Breast epithelium (tissue), 4 donors: ENCODE measurements at regions of chr2 and their contacts with region 1.

Region 1: GRCh38 chr2:200834701-200835100 is 23.0 kb downstream of the BZW1 start:
- DNase-seq: no peak
- H3K4me3 ChIP-seq: no peak overlapping the region
- H3K27ac ChIP-seq: no peak overlapping the region
- H3K4me1 ChIP-seq: no peaks in the 10 kb centered on the region
- H3K27me3 ChIP-seq: no peaks in the 10 kb centered on the region
- CTCF ChIP-seq: no peak
- POLR2A ChIP-seq: no peak

Region 2: DNA sequence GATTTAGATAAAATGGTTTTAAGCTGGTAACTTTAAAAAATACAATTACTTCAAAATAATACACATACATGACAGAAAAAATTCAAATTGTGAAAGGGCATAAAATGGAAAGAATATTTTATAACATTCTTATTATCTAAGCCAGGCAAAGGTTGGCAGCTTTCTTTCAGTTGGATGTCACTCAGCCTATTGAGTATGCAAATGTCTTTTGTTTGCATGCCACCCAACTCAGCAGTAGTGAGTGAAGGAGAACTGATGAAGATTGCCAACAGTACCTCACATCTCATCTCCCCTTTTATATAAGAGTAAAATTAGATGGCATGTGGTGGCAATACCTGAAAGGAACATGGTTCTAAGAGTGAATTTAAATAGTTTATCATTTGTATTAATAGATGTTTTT is 1566.2 kb after region 1 on chr2:
- intact Hi-C with region 1: loop called (anchors 5 kb)
- DNase-seq: no peak
- H3K4me3 ChIP-seq: no peak overlapping the region
- H3K27ac ChIP-seq: no peak overlapping the region
- H3K4me1 ChIP-seq: no peaks in the 10 kb centered on the region
- H3K27me3 ChIP-seq: no peaks in the 10 kb centered on the region
- CTCF ChIP-seq: no peak
- POLR2A ChIP-seq: no peak